ENCODE measurements at regions of chr10 and their contacts with region 1.

Region 1: DNA sequence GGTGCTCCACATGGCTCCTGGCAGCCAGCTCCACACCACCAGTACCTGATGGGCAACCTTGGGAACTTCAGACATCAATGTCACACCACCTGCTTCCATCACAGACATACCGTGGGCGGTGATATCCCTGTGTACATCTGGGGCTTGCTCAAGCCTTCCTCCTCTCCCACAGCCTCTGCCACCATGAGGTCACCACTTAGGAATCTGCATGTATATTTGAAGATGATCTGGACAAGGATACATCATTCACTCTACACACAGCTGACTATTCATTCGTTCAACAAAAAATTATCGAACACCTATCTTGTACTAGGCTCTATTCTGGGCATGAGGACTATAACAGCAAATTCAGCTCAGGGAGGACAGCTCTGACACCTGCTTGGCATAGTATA is 6.9 kb downstream of the DLG5 start:
- DNase-seq: peak; percentile 65 to 73 (median 72)
- ATAC-seq: peak; percentile 61
- H3K4me3 ChIP-seq: no peak overlapping the region
- H3K27ac ChIP-seq: no peak overlapping the region
- H3K4me1 ChIP-seq: peaks cover 11 to 30% of the 10 kb centered on the region in 2 experiments; a peak in 4 of 5 replicates
- H3K27me3 ChIP-seq: no peaks in the 10 kb centered on the region
- CTCF ChIP-seq: no peak
- EP300 ChIP-seq: peak; percentile 42; the same call in 1 of the 2 replicates
- POLR2A ChIP-seq: no peak
- RAD21 ChIP-seq: no peak

Region 2: DNA sequence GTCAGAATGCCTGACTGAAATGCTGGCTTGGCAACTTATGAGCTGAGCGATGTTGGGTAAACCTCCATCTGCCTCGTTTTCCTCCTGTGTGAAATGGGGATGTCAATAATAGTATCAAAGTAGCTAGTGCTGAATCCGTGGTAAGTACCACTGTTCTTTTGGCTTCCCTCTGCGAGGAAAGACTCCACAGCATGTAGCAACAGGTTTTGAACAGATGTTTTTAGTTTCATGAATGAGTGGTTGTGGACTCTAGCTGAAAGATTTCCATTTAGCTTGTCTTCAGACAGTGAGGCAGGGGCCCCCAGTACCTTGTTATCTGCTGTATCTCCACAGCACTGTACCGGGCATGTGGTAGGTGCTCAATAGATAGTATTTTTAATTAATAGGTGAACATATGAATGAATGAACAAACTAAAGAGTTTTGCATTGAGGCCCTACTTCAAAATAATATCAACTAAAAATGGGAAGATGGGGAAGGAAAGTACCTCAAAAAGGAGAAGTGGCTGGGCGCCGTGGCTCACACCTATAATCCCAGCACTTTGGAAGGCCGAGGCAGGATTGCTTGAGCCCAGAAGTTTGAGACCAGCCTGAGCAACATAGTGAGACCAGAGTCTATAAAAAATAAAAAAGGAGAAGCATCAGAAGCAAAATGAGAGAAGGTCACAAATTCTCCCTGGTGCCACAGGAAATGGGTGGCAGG is 12.5 kb after region 1 on chr10:
- CTCF ChIA-PET with region 1: no interaction called
- POLR2A ChIA-PET with region 1: interaction called, 89 read pairs
- in situ Hi-C with region 1: no loop called
- intact Hi-C with region 1: no loop called
- DNase-seq: no peak
- ATAC-seq: no peak
- H3K4me3 ChIP-seq: no peak overlapping the region
- H3K27ac ChIP-seq: no peak overlapping the region
- H3K4me1 ChIP-seq: peaks cover 3 to 15% of the 10 kb centered on the region in 2 experiments; a peak in 4 of 5 replicates
- H3K27me3 ChIP-seq: no peaks in the 10 kb centered on the region
- CTCF ChIP-seq: no peak
- EP300 ChIP-seq: no peak
- POLR2A ChIP-seq: no peak
- RAD21 ChIP-seq: no peak